ENCODE measurements at regions of chr9 and their contacts with region 1.

Region 1: GRCh38 chr9:5886114-5886939 is 4.4 kb upstream of the MLANA start:
- DNase-seq: peak; percentile 78 to 86 (median 84)
- H3K4me3 ChIP-seq: no peak overlapping the region
- H3K27ac ChIP-seq: no peak overlapping the region
- H3K4me1 ChIP-seq: peaks cover 0 to 16% (median 7%) of the 10 kb centered on the region in 4 experiments
- H3K27me3 ChIP-seq: no peaks in the 10 kb centered on the region

Region 2: GRCh38 chr9:5832543-5833529 is 53.5 kb before region 1 on chr9 and contains the start of gene ERMP1:
- CTCF ChIA-PET with region 1: interaction called, 29 read pairs
- POLR2A ChIA-PET with region 1: interaction called, 3 read pairs
- DNase-seq: peak; percentile 86 to 92 (median 91)
- H3K4me3 ChIP-seq: peak within 1 kb of the TSS; percentile 86 to 100 (median 93)
- H3K27ac ChIP-seq: peak within 1 kb of the TSS; percentile 50 to 78
- H3K4me1 ChIP-seq: peaks cover 15 to 56% (median 24%) of the 10 kb centered on the region in 4 experiments
- H3K27me3 ChIP-seq: no peaks in the 10 kb centered on the region

Region 3: DNA sequence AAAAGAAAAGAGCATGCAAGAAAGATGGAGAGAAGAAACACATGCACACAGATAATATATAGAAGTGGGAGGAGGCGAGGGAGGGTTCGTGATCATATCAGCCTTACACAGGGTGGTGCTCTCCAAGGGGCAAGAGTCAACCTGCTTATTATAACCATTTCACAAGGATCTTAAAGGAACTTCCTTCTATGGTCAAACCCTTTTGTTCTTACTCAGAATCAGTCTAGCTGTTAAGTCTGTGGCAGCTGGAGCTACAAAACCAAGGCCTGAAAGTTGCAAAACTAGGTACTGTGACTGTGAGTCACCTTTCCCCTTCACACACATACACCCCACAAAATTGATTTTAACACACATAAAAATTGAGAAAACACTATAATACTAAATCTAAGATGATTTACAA is 34.9 kb before region 1 on chr9:
- CTCF ChIA-PET with region 1: interaction called, 19 read pairs
- POLR2A ChIA-PET with region 1: no interaction called
- DNase-seq: peak in 2 of 3 donors; percentile 88 to 94
- H3K4me3 ChIP-seq: no peak overlapping the region
- H3K27ac ChIP-seq: peak overlapping the region in 1 of 2 experiments; percentile 44
- H3K4me1 ChIP-seq: peaks cover 26 to 70% (median 56%) of the 10 kb centered on the region in 4 experiments
- H3K27me3 ChIP-seq: no peaks in the 10 kb centered on the region

Region 4: DNA sequence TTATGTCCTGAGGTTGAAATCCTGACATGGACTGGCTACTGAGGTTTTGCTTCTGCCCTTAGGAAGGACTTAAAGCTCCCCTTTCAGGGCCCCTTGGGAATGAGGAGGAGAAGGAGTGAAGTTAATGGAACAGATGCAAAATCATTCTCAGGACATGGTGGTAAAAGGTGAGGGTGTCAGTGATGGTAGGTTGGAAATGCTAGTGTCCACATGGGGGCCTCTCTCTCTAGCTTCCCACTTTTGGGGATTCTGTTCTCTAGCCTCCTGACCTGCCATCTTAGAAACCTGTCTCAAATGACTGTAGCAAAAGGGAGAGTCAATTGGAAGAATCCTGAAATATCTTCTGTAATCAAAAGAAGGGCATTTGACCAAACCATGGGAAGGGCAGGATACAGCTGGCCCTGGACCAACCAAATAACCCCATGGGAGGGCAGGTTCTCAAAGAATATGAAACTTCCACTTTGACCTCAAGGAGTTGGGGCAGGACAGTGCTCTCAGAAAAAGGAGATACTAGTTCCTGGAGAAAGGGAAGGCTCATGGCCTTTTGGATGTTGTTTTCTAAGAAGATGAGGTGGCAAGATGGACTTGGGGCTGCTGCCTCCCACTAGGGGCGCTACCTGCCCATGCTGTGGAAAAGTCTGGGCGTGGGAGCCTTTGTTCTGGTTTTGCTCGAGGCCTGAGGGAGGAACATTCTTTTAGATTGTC is 16.9 kb before region 1 on chr9:
- CTCF ChIA-PET with region 1: interaction called, 82 read pairs
- POLR2A ChIA-PET with region 1: no interaction called
- DNase-seq: no peak
- H3K4me3 ChIP-seq: no peak overlapping the region
- H3K27ac ChIP-seq: no peak overlapping the region
- H3K4me1 ChIP-seq: peaks cover 0 to 14% (median 4%) of the 10 kb centered on the region in 4 experiments
- H3K27me3 ChIP-seq: no peaks in the 10 kb centered on the region

Region 5: DNA sequence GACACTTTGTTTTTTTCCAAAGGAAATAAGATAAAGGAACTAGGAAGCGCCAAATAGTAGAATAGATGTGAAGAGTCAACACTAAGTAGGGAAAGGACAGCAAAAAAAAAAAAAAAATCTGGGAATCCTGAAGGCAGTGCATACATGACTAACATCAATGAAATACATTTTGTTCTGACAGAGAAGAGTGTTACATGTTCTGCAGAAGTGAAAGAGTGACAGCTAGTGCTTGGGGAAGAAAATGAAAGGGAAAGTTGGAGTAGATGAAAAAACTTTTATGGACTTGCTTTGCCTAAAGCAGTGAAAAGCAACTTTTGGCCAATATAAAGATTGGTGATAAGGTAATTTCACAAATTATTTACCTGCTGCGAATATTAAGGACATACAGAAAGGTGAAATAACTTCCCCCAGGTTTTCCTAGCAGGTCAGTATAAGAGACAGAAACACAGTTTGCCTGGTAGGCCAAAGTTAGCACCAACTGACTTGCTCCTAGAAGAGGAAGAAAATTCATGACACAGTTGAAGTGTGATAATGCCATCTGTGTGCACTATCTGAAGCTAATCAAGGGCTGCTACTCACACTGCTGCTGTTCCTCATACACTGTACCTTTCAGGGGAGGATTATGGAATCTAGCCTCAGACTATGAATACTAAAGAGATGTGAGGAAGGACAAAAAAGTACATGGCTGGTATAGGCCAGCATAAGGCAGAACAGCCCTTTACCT is 90.5 kb after region 1 on chr9:
- CTCF ChIA-PET with region 1: interaction called, 11 read pairs
- POLR2A ChIA-PET with region 1: no interaction called
- DNase-seq: peak; percentile 24 to 61 (median 54)
- H3K4me3 ChIP-seq: peak overlapping the region in 1 of 7 experiments; percentile 39
- H3K27ac ChIP-seq: peak overlapping the region; percentile 59 to 73
- H3K4me1 ChIP-seq: peaks cover 3 to 8% (median 4%) of the 10 kb centered on the region in 4 experiments
- H3K27me3 ChIP-seq: no peaks in the 10 kb centered on the region